Motor neuron (in vitro differentiated cells): ENCODE measurements at regions of chr21 and their contacts with region 1.

Region 1: GRCh38 chr21:45973659-45974072 is 7.9 kb upstream of the COL6A1 start:
- ATAC-seq: peak; percentile 3 to 51 (median 28)
- H3K4me3 ChIP-seq: peak overlapping the region; percentile 5 to 23 (median 19)
- H3K27ac ChIP-seq: peak overlapping the region; percentile 45 to 75
- H3K4me1 ChIP-seq: peaks cover 48 to 63% of the 10 kb centered on the region in 2 donors

Region 2: DNA sequence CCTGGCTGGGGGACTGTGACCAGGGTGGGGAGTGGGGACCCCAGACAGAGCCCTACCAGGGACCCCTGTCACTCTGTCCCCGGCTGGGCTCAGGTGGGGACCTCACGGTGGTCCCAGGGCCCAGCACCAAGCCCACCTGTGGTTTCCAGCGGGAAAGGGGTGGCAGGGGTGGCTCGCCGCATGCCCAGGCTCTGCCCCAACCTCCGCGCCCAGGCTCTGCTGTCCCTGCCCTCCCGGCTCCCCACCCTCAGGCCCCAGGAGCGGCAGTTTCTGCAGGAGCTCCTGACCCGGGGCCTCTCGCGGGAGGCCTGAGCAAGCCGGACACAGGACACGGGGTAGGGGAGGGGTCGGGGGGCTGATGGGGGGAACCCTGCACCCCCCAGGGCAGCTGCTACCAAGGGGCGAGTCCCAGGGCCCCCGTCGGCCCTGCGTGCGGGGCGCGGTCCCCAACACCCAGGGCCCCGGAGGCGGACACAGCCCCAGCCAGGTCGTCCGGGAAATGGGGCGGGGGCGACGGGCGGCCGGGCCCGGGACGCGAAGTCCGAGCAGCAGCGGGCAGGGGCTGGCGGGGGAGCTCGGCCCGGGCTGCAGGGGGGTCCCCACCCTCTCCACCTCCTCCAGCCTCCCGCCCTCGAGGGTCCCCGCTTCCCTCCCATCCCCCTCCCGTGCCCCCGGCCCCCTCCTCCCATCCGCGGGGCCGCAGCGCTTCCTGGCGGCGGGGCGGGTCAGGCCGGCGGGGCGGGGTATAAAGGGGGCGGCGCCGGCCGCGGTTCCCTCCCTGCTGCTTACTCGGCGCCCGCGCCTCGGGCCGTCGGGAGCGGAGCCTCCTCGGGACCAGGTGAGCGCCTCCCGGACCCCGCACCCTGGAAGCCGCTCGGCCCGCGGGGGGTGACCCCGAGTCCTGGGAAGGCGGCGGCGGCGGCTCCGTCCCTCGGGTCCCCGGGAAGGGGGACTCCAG is 123.9 kb after region 1 on chr21 and contains the start of gene COL6A2:
- in situ Hi-C with region 1: no loop called
- ATAC-seq: peak; percentile 57 to 93 (median 75)
- H3K4me3 ChIP-seq: peak within 1 kb of the TSS; percentile 27 to 69 (median 42)
- H3K27ac ChIP-seq: no peak within 1 kb of the TSS
- H3K4me1 ChIP-seq: peaks cover 0 to 13% of the 10 kb centered on the region in 2 donors
- total RNA-seq, gene COL6A2: 2.6 to 153 (median 5.0) TPM

Region 3: GRCh38 chr21:46110499-46111192 is 137.0 kb after region 1 on chr21:
- in situ Hi-C with region 1: loop called in 1 of 9 experiments (anchors 10 kb)
- ATAC-seq: peak in 5 of 8 experiments; percentile 37 to 78 (median 55)
- H3K4me3 ChIP-seq: no peak overlapping the region
- H3K27ac ChIP-seq: no peak overlapping the region
- H3K4me1 ChIP-seq: no peaks in the 10 kb centered on the region